Lower lobe of right lung (tissue), 2 donors: ENCODE measurements at regions of chr20 and their contacts with region 1.

Region 1: DNA sequence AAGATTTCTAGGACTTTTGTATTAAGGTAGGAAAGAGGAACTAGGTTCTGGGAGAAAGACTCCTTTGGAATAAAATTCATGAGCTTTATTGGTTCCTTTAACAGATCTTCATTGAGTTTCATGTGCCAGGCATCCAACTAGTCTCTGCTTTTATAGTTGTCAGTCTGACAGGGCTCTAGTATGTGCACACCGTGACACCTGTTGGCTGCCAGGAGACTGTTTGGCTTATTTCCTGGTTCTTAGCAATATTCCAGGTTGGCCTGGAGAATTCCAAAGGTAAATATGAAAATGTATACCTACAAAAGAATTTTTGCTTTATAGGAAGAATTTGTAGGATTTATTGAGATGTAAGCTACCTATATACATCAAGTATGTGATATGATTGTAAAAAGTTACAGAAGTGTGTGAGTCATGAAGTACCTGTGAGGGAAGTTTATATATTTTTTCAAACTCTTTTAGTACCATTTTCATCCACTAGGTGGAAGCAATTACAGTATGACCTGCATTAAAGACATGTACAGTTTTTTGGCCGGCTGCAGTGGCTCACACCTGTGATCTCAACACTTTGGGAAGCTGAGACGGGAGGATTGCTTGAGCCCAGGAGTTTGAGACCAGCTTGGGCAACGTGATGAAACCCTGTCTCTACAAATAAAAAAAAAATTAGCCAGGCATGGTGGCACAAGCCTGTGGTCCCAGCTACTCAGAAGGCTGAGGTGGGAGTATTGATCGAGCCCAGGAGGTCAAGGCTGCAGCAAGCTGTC is 35.2 kb downstream of the NDUFAF5 start:
- DNase-seq: no peak
- ATAC-seq: peak; percentile 72 to 85
- H3K4me3 ChIP-seq: no peak overlapping the region
- H3K27ac ChIP-seq: no peak overlapping the region
- H3K4me1 ChIP-seq: peaks cover 6% of the 10 kb centered on the region
- H3K27me3 ChIP-seq: no peaks in the 10 kb centered on the region
- CTCF ChIP-seq: peak; percentile 57

Region 2: GRCh38 chr20:13898011-13898612 is 78.0 kb after region 1 on chr20:
- intact Hi-C with region 1: no loop called
- DNase-seq: no peak
- ATAC-seq: no peak
- H3K4me3 ChIP-seq: no peak overlapping the region
- H3K27ac ChIP-seq: no peak overlapping the region
- H3K4me1 ChIP-seq: no peaks in the 10 kb centered on the region
- H3K27me3 ChIP-seq: no peaks in the 10 kb centered on the region
- CTCF ChIP-seq: no peak

Region 3: DNA sequence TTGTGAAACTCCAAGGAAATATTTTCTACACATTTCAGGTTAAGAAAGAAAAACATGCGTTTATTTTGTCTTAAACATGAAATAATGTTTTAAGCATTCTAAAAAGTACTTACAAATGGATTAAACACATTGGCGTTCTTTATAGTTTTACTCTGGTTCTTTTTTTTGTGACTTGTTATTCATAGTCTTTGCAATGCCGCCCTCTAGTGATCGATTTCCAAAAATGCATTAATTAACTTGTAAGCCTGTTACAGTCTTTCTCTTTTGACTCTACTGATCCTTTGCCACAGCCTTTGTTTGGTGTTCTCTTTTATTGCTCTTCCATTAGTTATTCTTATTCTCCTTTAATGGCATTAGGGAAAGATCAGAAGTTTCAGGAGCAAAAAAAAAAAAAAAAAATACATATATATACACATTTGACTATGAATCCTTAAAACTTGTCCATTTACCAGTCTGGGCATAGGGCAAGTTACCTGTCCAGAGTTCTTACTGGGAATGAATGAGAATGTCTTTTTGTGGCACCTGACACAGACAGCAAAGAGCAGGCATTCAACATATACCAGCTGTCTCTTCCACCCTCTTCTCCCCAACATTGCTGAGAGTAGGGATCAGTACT is 235.2 kb after region 1 on chr20:
- intact Hi-C with region 1: loop called (anchors 10 kb)
- DNase-seq: no peak
- ATAC-seq: peak in 1 of 2 donors; percentile 63
- H3K4me3 ChIP-seq: no peak overlapping the region
- H3K27ac ChIP-seq: no peak overlapping the region
- H3K4me1 ChIP-seq: no peaks in the 10 kb centered on the region
- H3K27me3 ChIP-seq: no peaks in the 10 kb centered on the region
- CTCF ChIP-seq: peak; percentile 60